Adrenal gland (tissue), 19 donors: ENCODE measurements at regions of chr6 and their contacts with region 1.

Region 1: DNA sequence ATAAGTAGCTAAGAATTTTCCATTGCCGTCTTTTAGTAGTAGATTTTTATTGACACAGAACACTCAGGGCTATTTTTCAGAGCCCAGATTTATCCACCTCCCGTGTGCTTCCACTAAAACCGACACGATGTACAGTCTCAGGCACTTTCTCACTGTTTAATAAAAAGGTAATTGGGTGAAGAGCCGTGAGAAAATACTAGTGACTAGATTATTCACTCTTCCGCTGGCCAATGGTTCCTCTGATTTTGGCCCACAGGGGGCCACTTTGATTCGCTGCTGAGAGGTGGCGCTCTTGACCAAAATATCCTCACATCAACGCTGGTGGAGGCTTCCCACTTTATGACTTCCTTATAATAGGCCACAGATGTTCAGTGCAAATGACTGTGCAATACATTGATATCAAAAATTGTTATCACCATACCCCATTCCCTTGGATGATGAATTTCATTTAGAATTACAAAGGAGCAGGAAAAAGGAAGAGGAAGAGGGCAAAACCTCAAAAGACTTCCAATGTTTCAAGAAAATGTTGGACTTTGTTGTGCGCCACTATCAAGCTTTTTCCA is 12.3 kb upstream of the HDDC2 start:
- DNase-seq: peak; percentile 55 to 83 (median 72)
- H3K4me3 ChIP-seq: no peak overlapping the region
- H3K27ac ChIP-seq: no peak overlapping the region
- H3K4me1 ChIP-seq: no peaks in the 10 kb centered on the region
- H3K27me3 ChIP-seq: no peaks in the 10 kb centered on the region
- CTCF ChIP-seq: peak; percentile 52 to 87 (median 74)
- POLR2A ChIP-seq: no peak

Region 2: GRCh38 chr6:125753218-125753936 is 439.3 kb after region 1 on chr6:
- intact Hi-C with region 1: loop called in 1 of 2 experiments (anchors 5 kb)
- DNase-seq: no peak
- H3K4me3 ChIP-seq: no peak overlapping the region
- H3K27ac ChIP-seq: no peak overlapping the region
- H3K4me1 ChIP-seq: peaks cover 3 to 18% of the 10 kb centered on the region in 2 donors
- H3K27me3 ChIP-seq: peaks cover 37% of the 10 kb centered on the region
- CTCF ChIP-seq: peak; percentile 15 to 53 (median 39)
- POLR2A ChIP-seq: no peak

Region 3: DNA sequence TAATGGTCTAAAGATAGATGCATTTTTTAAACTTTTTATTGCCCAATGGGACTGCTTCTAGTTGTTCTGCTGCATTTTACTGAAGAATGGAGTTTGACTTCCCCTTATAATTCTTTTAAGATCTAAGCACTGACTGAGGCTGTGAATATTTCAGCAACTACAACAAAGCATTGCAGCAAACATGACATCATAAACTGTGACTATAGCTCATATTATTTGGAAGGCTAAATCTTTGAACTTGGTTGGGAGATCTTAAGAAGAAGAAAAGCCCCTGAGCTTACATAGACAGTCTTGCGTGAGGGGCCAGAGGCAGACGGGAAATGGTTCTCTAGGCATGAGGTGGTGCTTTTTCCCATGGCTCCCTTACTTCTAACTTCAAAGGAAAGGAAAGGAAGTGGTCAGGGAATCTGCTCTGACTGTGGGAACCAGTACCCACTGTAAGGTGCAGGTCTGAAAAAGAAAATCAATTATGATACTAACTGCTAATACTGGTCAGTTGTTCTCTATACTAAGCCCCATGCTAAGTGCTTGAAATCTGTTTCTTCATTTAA is 450.1 kb after region 1 on chr6:
- intact Hi-C with region 1: loop called (anchors 5 kb)
- DNase-seq: no peak
- H3K4me3 ChIP-seq: no peak overlapping the region
- H3K27ac ChIP-seq: no peak overlapping the region
- H3K4me1 ChIP-seq: no peaks in the 10 kb centered on the region
- H3K27me3 ChIP-seq: peaks cover 11% of the 10 kb centered on the region
- CTCF ChIP-seq: no peak
- POLR2A ChIP-seq: no peak

Region 4: DNA sequence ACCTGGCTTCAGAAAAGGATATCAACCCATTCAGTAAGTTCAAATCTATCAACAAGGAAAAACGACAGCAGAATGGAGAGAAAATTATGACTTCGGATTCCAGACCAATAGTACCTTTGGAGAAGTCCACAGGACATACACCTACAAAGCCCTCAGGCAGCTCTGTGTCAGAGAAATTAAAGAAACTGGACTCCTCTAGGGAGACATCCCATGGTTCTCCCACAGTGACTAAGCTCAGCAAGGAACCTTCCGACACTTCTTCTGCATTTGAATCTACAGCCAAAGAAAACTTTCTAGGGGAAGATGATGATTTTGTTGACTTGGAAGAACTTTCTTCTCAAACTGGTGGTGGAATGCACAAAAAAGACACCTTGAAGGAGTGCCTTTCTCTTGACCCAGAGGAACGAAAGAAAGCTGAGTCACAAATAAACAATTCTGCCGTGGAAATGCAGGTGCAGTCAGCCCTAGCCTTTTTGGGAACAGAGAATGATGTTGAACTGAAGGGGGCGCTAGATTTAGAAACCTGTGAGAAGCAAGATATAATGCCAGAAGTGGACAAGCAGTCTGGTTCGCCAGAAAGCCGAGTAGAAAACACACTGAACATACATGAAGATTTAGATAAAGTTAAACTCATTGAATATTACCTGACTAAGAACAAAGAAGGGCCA is 575.0 kb after region 1 on chr6:
- intact Hi-C with region 1: no loop called
- DNase-seq: peak in 1 of 7 donors; percentile 19
- H3K4me3 ChIP-seq: no peak overlapping the region
- H3K27ac ChIP-seq: no peak overlapping the region
- H3K4me1 ChIP-seq: peaks cover 0 to 5% of the 10 kb centered on the region in 2 donors
- H3K27me3 ChIP-seq: no peaks in the 10 kb centered on the region
- CTCF ChIP-seq: peak in 5 of 6 experiments; percentile 19 to 41 (median 32)
- POLR2A ChIP-seq: no peak